Naive thymus-derived CD8-positive, alpha-beta T cell (primary cell): ENCODE measurements at regions of chr21 and their contacts with region 1.

Region 1: DNA sequence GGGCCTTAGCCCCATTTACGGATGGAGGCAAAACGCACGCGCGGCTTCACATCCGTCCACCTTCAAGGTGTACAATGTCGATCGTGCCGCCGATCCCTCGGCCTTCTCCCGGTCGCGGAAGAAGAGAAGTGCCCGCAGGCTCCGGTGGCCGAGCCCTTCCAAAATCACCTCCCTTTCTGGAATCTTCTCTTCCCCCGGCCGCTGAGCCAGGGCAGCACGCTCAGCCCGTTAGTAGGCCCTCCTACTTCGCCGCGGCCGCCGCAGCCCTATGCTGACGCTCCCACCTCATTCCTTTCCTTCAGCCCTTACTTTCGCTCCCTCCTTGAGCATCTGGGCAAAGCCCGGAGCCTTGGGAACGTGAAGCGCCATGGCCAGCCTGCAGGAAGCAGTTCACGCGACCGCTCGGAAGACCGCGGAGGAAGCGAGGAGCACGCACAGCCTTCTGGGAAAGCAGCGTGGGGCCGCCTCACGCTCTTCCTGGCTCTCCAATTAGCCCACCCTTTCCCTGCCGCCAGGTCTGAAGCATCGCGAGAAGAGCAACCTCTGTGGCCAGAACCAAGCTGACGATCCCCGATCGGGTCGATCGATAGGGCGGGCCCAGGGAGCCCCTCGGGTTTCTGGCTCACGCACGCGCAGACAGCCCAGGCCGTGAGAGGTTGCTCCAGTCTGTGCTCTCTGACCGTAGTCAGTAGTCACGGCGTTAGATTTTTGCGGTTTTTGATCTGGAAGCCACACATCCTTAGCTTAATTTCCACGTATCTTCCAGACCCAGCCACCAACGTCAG is at the start of gene CCT8:
- DNase-seq: peak; percentile 92 to 100 (median 99)
- ATAC-seq: peak; percentile 88 to 90
- H3K4me3 Mint-ChIP-seq: peak within 1 kb of the TSS; percentile 97 to 100 (median 100)
- H3K27ac Mint-ChIP-seq: peak within 1 kb of the TSS; percentile 97 to 100 (median 99)
- H3K4me1 Mint-ChIP-seq: peaks cover 27 to 80% (median 62%) of the 10 kb centered on the region in 4 donors
- H3K27me3 Mint-ChIP-seq: no peaks in the 10 kb centered on the region
- polyA plus RNA-seq, gene CCT8: 130 to 182 (median 168) TPM

Region 2: GRCh38 chr21:28992526-28993292 is 80.7 kb before region 1 on chr21 and contains the start of gene LTN1:
- POLR2A ChIA-PET with region 1: interaction called, 14 read pairs
- DNase-seq: peak; percentile 92 to 99 (median 98)
- ATAC-seq: peak; percentile 91 to 92
- H3K4me3 Mint-ChIP-seq: peak within 1 kb of the TSS; percentile 92 to 99 (median 98)
- H3K27ac Mint-ChIP-seq: peak within 1 kb of the TSS; percentile 94 to 99 (median 98)
- H3K4me1 Mint-ChIP-seq: peaks cover 14 to 46% (median 38%) of the 10 kb centered on the region in 4 donors
- H3K27me3 Mint-ChIP-seq: no peaks in the 10 kb centered on the region
- polyA plus RNA-seq, gene LTN1: 12.0 to 14.1 (median 13.0) TPM

Region 3: DNA sequence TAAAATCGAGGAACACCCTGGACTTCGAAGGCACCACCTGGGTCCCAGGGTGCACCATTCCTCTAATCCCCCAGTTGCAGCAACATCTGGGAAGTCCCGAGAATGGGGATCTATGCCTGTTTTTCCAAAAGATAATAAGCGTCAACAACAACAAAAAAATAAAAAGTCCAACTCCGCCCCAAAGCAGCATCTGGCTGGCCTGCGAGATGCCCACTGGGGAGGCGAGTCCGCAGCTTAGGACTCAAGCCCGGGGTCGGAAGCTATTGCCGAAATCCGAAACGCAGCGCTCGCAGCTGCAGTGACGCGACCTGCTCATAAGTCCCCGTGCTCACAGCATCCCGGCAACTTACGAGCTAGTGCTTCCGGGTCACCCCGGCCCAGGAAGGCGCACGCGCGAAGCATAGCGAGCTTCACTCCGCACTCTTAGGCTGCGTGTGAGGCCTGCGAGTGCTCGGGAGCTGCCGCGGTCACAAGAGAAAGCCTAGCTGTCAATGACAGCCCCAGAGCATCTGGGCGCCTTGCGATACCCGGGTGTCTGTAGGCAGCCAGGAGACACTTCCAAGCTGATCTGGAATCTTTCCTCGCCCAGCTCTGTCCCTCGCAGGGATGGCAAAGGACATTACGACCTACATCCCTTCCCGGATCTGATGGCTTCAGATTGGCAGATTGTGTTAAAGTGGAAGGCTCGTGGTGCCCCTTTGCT is 70.8 kb before region 1 on chr21:
- POLR2A ChIA-PET with region 1: interaction called, 31 read pairs
- DNase-seq: peak; percentile 87 to 98 (median 94)
- ATAC-seq: peak; percentile 99 to 100
- H3K4me3 Mint-ChIP-seq: peak overlapping the region; percentile 84 to 96 (median 93)
- H3K27ac Mint-ChIP-seq: peak overlapping the region; percentile 97 to 99 (median 98)
- H3K4me1 Mint-ChIP-seq: peaks cover 1 to 24% (median 12%) of the 10 kb centered on the region in 4 donors
- H3K27me3 Mint-ChIP-seq: no peaks in the 10 kb centered on the region

Region 4: GRCh38 chr21:29018540-29018939 is 54.9 kb before region 1 on chr21:
- POLR2A ChIA-PET with region 1: interaction called, 69 read pairs
- DNase-seq: no peak
- ATAC-seq: no peak
- H3K4me3 Mint-ChIP-seq: peak overlapping the region; percentile 73 to 95 (median 90)
- H3K27ac Mint-ChIP-seq: peak overlapping the region; percentile 89 to 98 (median 94)
- H3K4me1 Mint-ChIP-seq: peaks cover 12 to 46% (median 36%) of the 10 kb centered on the region in 4 donors
- H3K27me3 Mint-ChIP-seq: no peaks in the 10 kb centered on the region

Region 5: GRCh38 chr21:29024474-29025327 is 48.7 kb before region 1 on chr21 and contains the start of gene USP16:
- POLR2A ChIA-PET with region 1: interaction called, 69 read pairs
- DNase-seq: peak; percentile 82 to 99 (median 94)
- ATAC-seq: peak; percentile 90 to 93
- H3K4me3 Mint-ChIP-seq: peak within 1 kb of the TSS; percentile 94 to 99 (median 97)
- H3K27ac Mint-ChIP-seq: peak within 1 kb of the TSS; percentile 98 to 100 (median 100)
- H3K4me1 Mint-ChIP-seq: peaks cover 24 to 64% (median 56%) of the 10 kb centered on the region in 4 donors
- H3K27me3 Mint-ChIP-seq: peaks cover 0 to 1% (median 0%) of the 10 kb centered on the region in 5 donors
- polyA plus RNA-seq, gene USP16: 20.0 to 21.9 (median 20.6) TPM

Region 6: GRCh38 chr21:29056005-29056404 is 17.4 kb before region 1 on chr21:
- POLR2A ChIA-PET with region 1: no interaction called
- DNase-seq: no peak
- ATAC-seq: no peak
- H3K4me3 Mint-ChIP-seq: no peak overlapping the region
- H3K27ac Mint-ChIP-seq: peak overlapping the region in 2 of 10 donors; percentile 13 to 37
- H3K4me1 Mint-ChIP-seq: no peaks in the 10 kb centered on the region
- H3K27me3 Mint-ChIP-seq: no peaks in the 10 kb centered on the region

Region 7: DNA sequence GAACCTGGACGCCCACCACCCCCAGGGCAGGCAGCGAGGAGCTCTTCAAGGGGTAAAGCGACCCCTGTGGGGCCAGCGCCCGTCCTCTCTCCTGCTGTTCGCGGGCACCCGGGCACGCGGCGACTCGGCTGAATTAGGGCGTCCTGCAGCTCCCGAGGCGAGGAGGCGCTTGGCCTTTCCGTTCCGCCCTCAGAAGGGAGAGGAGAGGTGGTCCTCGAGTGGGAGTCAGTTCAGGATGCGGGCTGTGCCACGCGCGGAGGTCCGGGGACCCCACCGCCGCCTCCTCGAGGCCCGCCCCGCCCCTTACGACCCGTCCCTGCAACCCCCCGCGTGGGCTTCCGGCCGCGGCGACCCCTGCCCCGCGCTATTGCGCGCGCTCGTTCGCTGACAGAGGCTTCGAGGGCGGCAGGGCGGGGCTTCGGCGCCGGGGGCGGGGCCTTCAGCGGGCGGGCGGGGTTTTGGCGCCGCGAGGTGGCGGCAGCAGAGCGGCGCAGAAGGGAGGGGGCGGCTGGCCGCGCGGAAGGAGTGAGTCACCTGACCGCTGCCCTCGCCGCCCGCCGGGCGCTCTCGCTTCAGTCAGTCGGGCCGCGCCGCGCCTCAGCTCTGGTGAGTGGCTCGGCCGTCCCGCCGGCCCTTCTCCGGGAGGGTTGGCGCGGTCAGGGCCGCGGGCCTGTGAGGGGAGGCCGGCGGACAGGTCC is 225.1 kb after region 1 on chr21 and contains the start of gene BACH1:
- POLR2A ChIA-PET with region 1: interaction called, 14 read pairs
- DNase-seq: peak; percentile 60 to 88 (median 78)
- ATAC-seq: peak; percentile 65 to 74
- H3K4me3 Mint-ChIP-seq: peak within 1 kb of the TSS; percentile 84 to 98 (median 88)
- H3K27ac Mint-ChIP-seq: peak within 1 kb of the TSS; percentile 39 to 96 (median 92)
- H3K4me1 Mint-ChIP-seq: peaks cover 26 to 80% (median 78%) of the 10 kb centered on the region in 4 donors
- H3K27me3 Mint-ChIP-seq: no peaks in the 10 kb centered on the region
- polyA plus RNA-seq, gene BACH1: 22.5 to 25.6 (median 23.4) TPM